Sciatic nerve (tissue), 2 donors: ENCODE measurements at regions of chr1 and their contacts with region 1.

Region 1: GRCh38 chr1:207831517-207832327 is 79.2 kb downstream of the CD34 start:
- DNase-seq: no peak
- ATAC-seq: peak; percentile 40

Region 2: DNA sequence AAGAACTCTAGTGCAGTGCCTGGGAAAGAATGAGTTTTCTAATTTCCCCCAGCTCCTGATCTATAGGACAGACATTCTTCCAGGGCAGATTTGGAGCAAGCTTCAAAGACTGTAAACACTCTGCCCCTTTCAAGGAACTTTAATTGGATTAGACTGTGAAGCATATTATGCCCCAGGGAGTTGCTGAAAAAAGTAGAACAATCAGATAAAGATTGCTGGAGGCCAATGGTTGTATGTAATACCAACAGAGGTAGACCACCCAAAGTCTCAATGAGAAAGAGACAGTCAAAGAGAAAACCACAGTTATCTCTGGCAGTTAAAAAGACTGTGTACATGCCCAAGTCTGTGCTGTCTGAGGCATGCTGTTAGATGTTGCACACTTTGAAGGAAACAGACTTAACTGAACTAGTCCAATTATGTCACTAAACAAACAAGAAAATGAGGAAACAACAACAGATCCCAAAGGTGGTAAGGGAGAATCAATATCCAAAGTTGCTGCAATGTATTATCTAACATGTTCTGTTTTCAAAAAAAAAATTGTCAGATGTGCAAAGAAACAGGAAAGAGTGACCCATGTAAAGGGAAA is 703.3 kb before region 1 on chr1:
- intact Hi-C with region 1: no loop called
- DNase-seq: no peak
- ATAC-seq: no peak

Region 3: DNA sequence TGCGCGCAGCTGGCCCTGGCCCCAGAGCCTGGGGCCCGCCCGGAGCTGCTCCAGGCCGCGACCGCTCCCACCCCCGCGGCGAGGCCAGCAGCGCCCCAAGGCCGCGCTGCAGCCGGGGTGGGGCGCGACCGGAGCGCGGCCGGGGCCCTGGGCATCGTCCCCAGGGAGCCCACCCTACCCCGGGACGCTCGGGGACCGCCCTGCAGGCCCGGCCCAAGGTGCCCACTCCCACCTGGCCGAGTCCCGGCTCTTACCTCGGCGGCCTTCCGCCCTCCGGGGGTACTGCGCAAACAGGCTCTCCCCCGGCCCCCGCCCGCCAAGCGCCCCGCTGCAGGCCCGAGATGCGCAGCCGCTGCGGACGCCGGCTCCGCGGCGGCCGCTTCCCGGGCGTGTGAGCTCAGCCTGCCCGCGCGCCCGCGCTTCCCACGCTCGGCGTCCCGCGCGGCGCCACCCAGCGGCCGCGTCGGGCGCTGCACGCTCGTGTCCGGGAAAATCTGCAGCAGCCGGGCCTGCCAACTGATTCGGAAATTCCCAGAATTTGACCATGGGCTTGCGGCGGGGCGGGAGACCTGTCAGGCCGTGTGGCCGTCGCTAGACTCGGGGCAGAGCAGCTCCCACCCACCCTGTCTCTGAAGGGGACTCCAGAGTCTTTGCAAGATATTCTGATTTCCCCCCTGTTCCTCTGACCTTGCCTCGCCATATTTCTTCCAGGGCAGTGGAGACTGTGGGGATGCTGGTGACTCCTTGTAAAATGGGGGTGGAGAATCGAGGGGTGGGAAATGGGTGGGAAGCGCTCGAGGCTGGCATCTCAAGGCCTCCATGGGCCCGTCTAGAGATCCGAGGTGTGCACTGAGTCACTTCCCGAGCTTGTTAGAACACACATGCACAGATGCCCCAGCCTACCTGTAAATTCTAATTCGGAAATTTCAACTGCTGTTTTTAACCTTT is 37.3 kb after region 1 on chr1:
- intact Hi-C with region 1: loop called (anchors 5 kb)
- DNase-seq: peak; percentile 86
- ATAC-seq: peak; percentile 19